Activated T-helper 1 cell treated with anti-CD3 and anti-CD28 coated beads, Interleukin-12 subunit alpha, Interleukin-12 subunit beta, Interleukin-2, Interleukin-4 antibody, amounts not matched to agents 30 ng/mL and 10 ng/mL and 1 ng/mL, durations not matched to agents 14 hours and 24 hours and 36 hours (primary cell): ENCODE measurements at regions of chr14 and their contacts with region 1.

Region 1: GRCh38 chr14:74881431-74882361 is at the start of gene DLST:
- DNase-seq: peak; percentile 84
- H3K4me3 Mint-ChIP-seq: peak within 1 kb of the TSS; percentile 100
- H3K27ac Mint-ChIP-seq: peak within 1 kb of the TSS; percentile 99
- H3K4me1 Mint-ChIP-seq: peaks cover 52% of the 10 kb centered on the region
- H3K27me3 Mint-ChIP-seq: no peaks in the 10 kb centered on the region
- total RNA-seq, gene DLST: 98.9 and 107 TPM in 2 replicates

Region 2: GRCh38 chr14:74712499-74713394 is 168.9 kb before region 1 on chr14 and contains the starts of genes AREL1 and FCF1:
- intact Hi-C with region 1: loop called (anchors 5 kb)
- DNase-seq: peak; percentile 83
- H3K4me3 Mint-ChIP-seq: peak within 1 kb of the TSS; percentile 95
- H3K27ac Mint-ChIP-seq: peak within 1 kb of the TSS; percentile 95
- H3K4me1 Mint-ChIP-seq: peaks cover 49% of the 10 kb centered on the region
- H3K27me3 Mint-ChIP-seq: no peaks in the 10 kb centered on the region
- total RNA-seq, gene AREL1: 45.8 and 50.2 TPM in 2 replicates
- total RNA-seq, gene FCF1: 64.5 and 68.2 TPM in 2 replicates

Region 3: DNA sequence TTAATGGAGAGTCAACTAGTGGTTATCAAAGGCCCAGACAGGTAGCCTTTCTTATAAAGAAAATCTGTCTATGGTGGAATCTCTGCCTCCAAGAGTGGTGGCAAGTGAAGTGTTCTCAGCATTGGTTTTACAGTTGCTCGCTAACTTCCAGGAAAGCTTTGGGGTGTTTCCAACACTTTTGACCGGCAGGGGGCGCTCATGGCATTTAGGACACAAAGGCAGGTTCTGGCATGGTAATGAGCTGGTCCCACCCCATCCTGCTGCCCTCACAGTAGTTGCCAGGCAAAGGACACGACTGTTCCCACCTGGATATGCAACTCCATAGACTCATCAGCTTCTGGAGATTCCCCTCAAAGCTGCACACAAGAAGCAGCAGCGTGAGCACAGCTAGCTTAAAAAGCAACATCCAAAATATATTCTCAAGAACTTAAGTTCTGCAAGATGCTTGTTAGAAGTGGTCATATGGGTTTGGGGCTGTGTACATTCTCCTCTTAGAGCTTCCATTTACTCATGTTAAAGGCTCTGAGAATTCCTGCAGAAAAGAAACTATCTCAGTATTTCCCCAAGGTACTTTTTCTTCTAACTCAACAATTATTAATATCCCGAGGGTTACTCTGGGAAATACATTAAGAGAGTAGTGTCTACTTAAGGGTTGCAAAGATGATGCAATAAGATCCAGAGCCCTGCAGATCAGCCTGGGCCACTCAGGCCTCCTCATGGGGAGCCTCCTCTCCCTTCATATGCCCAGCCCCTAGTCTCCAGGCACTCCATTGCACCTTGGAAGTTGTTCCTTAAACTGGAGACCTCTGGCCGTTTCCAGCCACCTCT is 20.6 kb before region 1 on chr14:
- intact Hi-C with region 1: loop called (anchors 1 kb)
- DNase-seq: peak; percentile 81
- H3K4me3 Mint-ChIP-seq: no peak overlapping the region
- H3K27ac Mint-ChIP-seq: no peak overlapping the region
- H3K4me1 Mint-ChIP-seq: peaks cover 12% of the 10 kb centered on the region
- H3K27me3 Mint-ChIP-seq: peaks cover 1% of the 10 kb centered on the region

Region 4: DNA sequence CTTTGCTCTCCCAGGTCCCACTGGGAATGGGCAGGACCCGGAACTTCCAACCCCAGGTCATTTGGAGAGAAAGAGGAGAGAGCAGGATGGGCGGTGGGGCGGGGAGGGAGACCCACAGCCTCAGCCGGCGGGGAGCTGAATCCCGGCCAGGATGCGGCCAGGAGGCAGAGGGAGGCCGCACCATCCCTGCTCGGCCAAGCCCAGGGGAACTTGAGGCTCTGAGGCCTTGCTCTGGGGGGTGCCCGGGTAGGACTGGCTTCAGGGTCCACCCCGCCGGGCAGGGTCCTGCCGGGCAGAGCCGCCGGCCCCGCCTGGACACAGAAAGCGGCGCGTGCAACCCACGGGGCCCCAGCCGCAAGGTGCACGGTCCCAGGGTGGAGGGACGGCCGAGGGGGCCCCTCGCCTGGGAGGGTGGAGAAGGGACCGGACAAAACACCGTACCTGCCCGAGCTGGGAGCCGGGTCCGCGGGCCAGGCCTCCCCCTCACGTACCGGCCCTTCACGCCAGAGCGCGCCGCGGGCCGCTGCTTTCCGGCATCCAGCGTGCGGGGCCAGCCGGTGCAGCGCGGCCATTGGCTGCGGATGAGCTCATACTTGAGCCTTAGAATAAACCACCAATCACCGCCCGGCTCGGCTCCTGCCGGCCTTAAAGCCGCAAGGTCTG is 41.2 kb after region 1 on chr14 and contains the start of gene RPS6KL1:
- intact Hi-C with region 1: loop called (anchors 1 kb)
- DNase-seq: peak; percentile 73
- H3K4me3 Mint-ChIP-seq: peak within 1 kb of the TSS; percentile 72
- H3K27ac Mint-ChIP-seq: peak within 1 kb of the TSS; percentile 31
- H3K4me1 Mint-ChIP-seq: no peaks in the 10 kb centered on the region
- H3K27me3 Mint-ChIP-seq: peaks cover 3% of the 10 kb centered on the region
- total RNA-seq, gene RPS6KL1: 10.8 and 11.6 TPM in 2 replicates

Region 5: GRCh38 chr14:75022655-75023054 is 141.0 kb after region 1 on chr14:
- intact Hi-C with region 1: no loop called
- DNase-seq: no peak
- H3K4me3 Mint-ChIP-seq: no peak overlapping the region
- H3K27ac Mint-ChIP-seq: no peak overlapping the region
- H3K4me1 Mint-ChIP-seq: no peaks in the 10 kb centered on the region
- H3K27me3 Mint-ChIP-seq: no peaks in the 10 kb centered on the region

Region 6: GRCh38 chr14:75063407-75064213 is 181.9 kb after region 1 on chr14 and contains the start of gene ACYP1:
- intact Hi-C with region 1: loop called (anchors 10 kb)
- DNase-seq: peak; percentile 89
- H3K4me3 Mint-ChIP-seq: peak within 1 kb of the TSS; percentile 99
- H3K27ac Mint-ChIP-seq: peak within 1 kb of the TSS; percentile 96
- H3K4me1 Mint-ChIP-seq: peaks cover 31% of the 10 kb centered on the region
- H3K27me3 Mint-ChIP-seq: no peaks in the 10 kb centered on the region
- total RNA-seq, gene ACYP1: 37.9 and 43.0 TPM in 2 replicates